ENCODE measurements at regions of chr12 and their contacts with region 1.

Region 1: DNA sequence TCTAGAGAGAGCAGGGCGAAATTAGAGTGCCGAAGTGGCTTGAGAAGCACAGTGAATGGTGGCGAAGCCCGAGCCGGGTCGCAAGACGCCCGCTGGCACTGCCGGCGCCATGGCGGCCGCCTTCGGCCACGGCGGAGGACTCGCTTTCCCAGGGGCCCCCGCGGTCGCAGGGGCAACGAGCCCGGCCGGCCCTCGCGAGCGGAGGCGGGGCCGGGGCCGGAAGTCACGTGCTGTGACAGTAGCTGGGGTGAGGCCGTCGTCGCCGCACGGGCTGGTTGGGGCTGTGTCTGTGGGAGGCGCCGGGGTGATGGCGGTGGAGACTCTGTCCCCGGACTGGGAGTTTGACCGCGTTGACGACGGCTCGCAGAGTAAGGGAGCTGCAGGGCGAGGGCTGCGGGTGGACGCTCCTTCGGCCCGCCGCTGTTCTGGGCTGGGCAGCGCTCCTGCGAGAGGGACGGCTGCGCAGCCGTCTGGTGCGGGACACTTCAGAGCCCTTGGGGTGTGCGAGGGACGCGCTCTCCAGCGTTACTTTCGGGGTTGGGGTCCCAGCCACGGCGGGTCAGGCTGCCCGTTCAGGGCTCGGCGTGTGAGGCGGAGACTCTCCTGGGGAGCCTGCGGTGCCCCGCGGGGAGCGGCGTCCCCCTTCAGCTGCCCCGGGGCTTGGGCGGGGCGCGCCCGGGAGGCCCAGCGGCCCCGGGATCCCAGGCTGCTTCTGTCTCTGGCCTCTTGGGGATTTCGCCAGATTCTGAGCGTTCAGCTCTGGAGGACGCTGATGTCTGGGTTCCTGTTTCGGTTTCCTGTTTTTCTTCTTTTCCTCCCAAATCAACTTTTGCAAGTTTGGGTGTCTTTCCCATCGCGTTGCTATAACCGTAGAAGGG is at the start of gene WASHC4:
- DNase-seq: peak; percentile 81
- ATAC-seq: peak; percentile 98
- H3K4me3 ChIP-seq: peak within 1 kb of the TSS; percentile 93 to 98 (median 97)
- H3K27ac ChIP-seq: peak within 1 kb of the TSS; percentile 94
- H3K4me1 ChIP-seq: peaks cover 40% of the 10 kb centered on the region
- H3K27me3 ChIP-seq: no peaks in the 10 kb centered on the region; a peak in 1 of 5 replicates
- CTCF ChIP-seq: no peak; the same call in 1 of the 2 replicates
- EP300 ChIP-seq: peak in 1 of 2 experiments; percentile 29; a peak in 2 of 4 replicates
- POLR2A ChIP-seq: peak; percentile 97 to 99
- RAD21 ChIP-seq: no peak; the same call in 1 of the 2 replicates
- total RNA-seq, gene WASHC4: 36.3 and 39.6 TPM in 2 replicates

Region 2: DNA sequence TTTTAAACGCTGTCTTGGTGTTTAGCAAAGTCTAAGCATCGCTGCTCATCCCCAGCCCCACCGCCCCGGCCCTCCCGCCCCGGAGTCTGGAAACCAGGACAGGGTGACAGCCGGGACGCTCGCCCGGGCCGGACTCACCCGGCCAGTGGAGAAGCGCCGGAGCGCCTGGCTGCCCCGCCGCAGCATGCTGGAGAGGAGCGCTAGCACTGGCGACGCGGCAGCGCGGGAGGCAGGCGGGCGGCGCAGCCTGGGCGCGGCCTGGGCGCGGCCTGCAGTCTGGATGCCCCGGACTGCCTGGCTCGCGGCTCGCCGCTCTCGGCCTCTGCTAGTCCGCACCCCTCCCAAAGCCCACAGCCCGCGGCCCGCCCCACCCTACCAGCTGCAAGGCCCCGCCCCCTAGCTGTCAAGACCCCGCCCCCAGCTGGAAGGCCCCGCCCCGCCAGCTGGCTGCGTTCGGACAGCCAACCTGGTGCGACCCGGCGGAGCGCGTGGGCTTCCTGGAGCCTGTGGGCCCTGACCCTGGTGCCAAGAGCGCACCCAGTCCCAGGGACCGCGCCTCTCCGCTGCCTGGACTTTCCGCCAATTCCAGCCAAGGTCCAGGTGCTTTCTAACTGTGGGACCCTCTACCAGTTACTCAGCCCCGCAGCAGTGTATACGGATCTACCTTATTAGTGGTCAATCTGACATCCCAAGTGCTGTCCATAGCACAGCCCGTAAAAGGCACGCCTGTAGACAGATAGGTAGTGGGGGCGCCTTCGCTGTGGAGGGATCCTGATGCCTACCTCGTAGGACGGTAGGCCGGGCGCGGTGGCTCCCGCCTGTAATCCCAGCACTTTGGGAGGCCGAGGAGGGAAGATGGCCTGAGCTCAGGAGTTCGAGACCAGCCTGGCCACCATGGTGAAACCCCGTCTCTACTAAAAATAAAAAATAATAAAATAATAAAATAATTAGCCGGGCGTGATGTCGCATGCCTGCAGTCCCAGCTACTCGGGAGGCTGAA is 23.2 kb before region 1 on chr12 and contains the start of gene ALDH1L2:
- CTCF ChIA-PET with region 1: no interaction called
- POLR2A ChIA-PET with region 1: interaction called, 12 read pairs
- in situ Hi-C with region 1: no loop called
- intact Hi-C with region 1: no loop called
- DNase-seq: peak; percentile 15
- ATAC-seq: peak; percentile 97
- H3K4me3 ChIP-seq: peak within 1 kb of the TSS; percentile 41 to 67 (median 48); a peak in 5 of 6 replicates
- H3K27ac ChIP-seq: no peak within 1 kb of the TSS
- H3K4me1 ChIP-seq: peaks cover 16% of the 10 kb centered on the region
- H3K27me3 ChIP-seq: peaks cover 0 to 5% of the 10 kb centered on the region in 2 experiments; a peak in 1 of 5 replicates
- CTCF ChIP-seq: no peak
- EP300 ChIP-seq: no peak
- POLR2A ChIP-seq: no peak
- RAD21 ChIP-seq: no peak
- total RNA-seq, gene ALDH1L2: 0.40 and 0.87 TPM in 2 replicates

Measured in HepG2 (cell line).